Colonic mucosa (tissue), 4 donors: ENCODE measurements at regions of chr11 and their contacts with region 1.

Region 1: GRCh38 chr11:88543902-88544655 is 206.5 kb upstream of the CTSC start:
- DNase-seq: peak; percentile 84
- H3K4me3 ChIP-seq: no peak overlapping the region
- H3K27ac ChIP-seq: no peak overlapping the region
- H3K4me1 ChIP-seq: no peaks in the 10 kb centered on the region
- H3K27me3 ChIP-seq: no peaks in the 10 kb centered on the region
- CTCF ChIP-seq: peak; percentile 88

Region 2: DNA sequence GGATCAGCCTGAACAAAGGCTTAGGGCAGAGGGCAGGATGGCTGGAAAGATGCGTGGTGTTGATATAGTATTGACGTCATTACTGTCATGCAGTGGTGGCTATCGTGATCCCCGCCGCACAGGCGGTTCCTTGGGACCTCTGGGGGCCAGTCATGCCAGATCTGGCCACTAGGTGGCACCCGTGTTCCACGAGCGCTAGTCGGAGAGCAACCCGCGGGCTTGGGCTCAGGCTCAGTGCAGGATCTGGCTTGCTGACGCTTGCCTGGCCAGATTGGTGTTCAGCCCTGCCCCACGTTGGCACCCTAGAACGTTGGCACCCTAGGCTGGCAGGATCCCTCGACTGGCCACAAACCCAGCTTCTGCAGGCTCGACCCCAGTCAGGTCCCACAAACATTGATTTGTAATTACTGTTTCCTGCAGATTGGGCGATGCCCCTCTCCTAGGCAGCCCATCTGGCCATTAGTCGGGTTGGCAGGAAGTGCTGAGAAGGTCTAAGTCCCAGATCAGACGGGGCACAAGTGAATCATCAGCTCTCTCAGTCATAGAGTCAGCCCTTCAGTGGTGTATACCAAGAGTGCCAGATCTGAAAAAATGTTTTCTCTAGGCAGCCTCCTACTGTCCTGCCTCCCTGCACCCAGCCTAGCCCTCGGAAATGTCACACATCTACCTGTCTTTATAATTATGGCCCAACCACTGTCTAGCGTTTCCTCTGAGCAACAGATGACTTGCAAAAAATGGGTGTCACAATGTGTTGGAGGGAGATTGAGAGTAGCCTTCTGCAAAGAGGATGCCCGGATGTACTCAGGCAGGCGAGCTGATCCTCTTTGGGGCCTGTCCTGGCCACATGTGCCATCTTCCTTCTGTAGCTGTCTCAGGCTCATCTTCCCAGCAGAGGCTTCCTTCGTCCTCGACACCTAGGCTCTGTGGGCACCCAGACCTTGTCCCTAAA is 1191.0 kb before region 1 on chr11:
- intact Hi-C with region 1: loop called (anchors 5 kb)
- DNase-seq: peak; percentile 85
- H3K4me3 ChIP-seq: no peak overlapping the region
- H3K27ac ChIP-seq: no peak overlapping the region
- H3K4me1 ChIP-seq: peaks cover 5% of the 10 kb centered on the region
- H3K27me3 ChIP-seq: no peaks in the 10 kb centered on the region
- CTCF ChIP-seq: peak; percentile 99

Region 3: DNA sequence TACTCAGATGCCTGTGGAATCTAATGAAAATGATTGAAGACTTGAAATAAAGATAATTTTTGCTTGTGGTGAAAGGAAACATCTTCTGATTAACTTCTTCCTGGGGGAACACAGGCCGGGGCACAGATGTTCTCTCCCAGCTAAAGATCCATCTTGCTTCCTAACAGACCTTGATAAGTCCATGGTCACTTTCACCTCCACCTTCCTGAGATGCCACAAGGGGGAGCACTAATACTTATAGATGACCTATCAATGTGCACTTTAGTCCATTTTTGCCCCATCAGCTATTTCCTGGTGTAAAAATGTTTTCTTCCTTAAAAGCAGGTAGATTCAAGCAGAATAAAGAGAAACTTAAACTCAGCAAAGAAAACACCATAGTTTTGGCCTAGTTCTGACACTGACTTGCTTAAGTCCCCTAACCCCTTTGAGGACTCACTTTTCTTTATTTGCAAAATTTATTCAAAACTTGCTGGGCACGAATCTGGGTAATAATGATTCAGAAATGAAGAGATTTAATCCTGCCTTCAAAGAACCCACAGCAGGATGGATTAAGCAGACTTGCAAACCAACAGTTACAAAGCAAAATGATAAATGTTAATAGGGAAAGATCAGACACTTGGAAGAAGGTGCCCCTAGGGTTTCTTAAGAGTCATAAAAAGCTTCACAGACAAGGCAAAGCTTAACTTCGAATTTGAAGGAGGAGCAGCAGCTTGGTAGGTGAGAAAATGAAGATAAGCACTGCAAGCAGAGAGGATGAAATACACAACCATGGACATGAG is 527.5 kb before region 1 on chr11:
- intact Hi-C with region 1: loop called (anchors 1 kb)
- DNase-seq: peak; percentile 73
- H3K4me3 ChIP-seq: no peak overlapping the region
- H3K27ac ChIP-seq: no peak overlapping the region
- H3K4me1 ChIP-seq: no peaks in the 10 kb centered on the region
- H3K27me3 ChIP-seq: no peaks in the 10 kb centered on the region
- CTCF ChIP-seq: peak; percentile 80

Region 4: GRCh38 chr11:88231894-88232482 is 312.1 kb before region 1 on chr11:
- intact Hi-C with region 1: loop called (anchors 2 kb)
- DNase-seq: no peak
- H3K4me3 ChIP-seq: no peak overlapping the region
- H3K27ac ChIP-seq: no peak overlapping the region
- H3K4me1 ChIP-seq: no peaks in the 10 kb centered on the region
- H3K27me3 ChIP-seq: no peaks in the 10 kb centered on the region
- CTCF ChIP-seq: peak; percentile 50

Region 5: GRCh38 chr11:88480223-88480622 is 63.9 kb before region 1 on chr11:
- intact Hi-C with region 1: no loop called
- DNase-seq: no peak
- H3K4me3 ChIP-seq: no peak overlapping the region
- H3K27ac ChIP-seq: no peak overlapping the region
- H3K4me1 ChIP-seq: no peaks in the 10 kb centered on the region
- H3K27me3 ChIP-seq: no peaks in the 10 kb centered on the region
- CTCF ChIP-seq: no peak

Region 6: DNA sequence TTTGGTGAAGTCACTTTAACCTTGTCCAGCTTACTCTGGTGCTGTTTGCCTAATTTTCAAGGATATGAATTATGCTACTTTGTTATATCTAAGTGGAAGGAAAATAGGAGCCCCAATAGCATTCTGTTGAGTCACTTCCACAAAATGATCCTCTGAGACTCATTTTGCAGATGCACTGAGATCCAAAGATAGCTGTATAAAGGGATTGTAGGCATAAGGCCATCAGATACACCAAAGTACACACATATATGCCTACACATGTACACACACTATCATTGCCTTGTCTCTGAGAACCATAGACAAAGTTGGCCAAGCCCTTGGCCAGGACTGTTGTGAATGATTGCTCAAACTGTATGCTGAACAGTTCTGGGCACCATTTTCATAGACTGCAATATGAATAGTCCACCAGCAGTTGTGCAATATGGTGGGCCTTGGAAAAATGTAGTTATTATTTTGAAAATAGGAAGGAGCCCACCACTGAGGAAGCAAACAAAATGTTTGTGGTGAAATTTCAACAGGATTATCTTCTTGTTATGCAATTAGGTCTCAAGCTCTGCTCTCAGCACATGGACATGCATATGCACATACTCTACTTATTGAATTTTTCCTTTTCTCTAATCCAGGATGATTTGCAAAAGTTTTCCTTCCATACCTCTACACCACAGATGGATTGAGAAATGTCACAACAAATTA is 20.6 kb before region 1 on chr11:
- intact Hi-C with region 1: no loop called
- DNase-seq: no peak
- H3K4me3 ChIP-seq: no peak overlapping the region
- H3K27ac ChIP-seq: no peak overlapping the region
- H3K4me1 ChIP-seq: no peaks in the 10 kb centered on the region
- H3K27me3 ChIP-seq: no peaks in the 10 kb centered on the region
- CTCF ChIP-seq: no peak